ENCODE measurements at regions of chr10 and their contacts with region 1.

Region 1: DNA sequence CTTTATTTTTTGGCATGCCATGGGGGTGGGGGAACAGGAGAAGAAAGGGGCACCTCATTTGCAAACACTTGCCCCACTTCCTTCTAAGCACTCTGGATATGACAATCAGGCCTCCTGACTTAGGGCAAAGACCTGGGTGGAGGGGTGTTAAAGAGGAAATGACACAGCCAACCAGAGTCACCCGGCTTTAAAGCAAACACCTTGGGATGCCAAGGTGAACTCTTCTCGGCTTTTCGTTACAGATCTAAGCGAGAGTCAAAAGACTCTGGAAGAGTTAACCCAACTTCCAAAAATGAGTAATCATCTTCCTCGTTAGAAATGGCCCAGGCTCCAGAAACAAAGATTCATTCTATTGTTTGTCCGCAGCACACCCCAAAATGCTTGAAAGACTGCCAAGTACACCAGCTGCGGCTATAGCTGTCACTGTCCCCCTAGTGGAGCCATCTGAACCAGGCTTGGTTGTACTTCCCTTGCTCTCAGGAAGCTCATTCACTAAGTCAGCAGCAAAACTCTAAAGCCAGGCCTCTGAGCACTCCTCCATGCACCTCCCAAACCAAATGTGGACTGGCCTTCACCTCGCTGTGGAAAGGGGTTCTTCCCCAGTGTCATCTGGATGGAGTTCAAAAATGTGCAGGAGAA is 24.8 kb downstream of the FAM53B start:
- DNase-seq: no peak
- ATAC-seq: peak; percentile 43
- H3K4me3 Mint-ChIP-seq: peak overlapping the region; percentile 69
- H3K27ac Mint-ChIP-seq: peak overlapping the region; percentile 93
- H3K4me1 Mint-ChIP-seq: peaks cover 98% of the 10 kb centered on the region
- H3K27me3 Mint-ChIP-seq: no peaks in the 10 kb centered on the region
- CTCF ChIP-seq: no peak

Region 2: GRCh38 chr10:124388823-124389612 is 330.3 kb before region 1 on chr10:
- CTCF ChIA-PET with region 1: no interaction called
- POLR2A ChIA-PET with region 1: no interaction called
- intact Hi-C with region 1: no loop called
- DNase-seq: peak; percentile 97
- ATAC-seq: peak; percentile 99
- H3K4me3 Mint-ChIP-seq: peak overlapping the region; percentile 58
- H3K27ac Mint-ChIP-seq: no peak overlapping the region
- H3K4me1 Mint-ChIP-seq: peaks cover 3% of the 10 kb centered on the region
- H3K27me3 Mint-ChIP-seq: peaks cover 7% of the 10 kb centered on the region
- CTCF ChIP-seq: peak; percentile 86

Region 3: GRCh38 chr10:124539935-124540641 is 179.2 kb before region 1 on chr10:
- CTCF ChIA-PET with region 1: interaction called, 29 read pairs
- POLR2A ChIA-PET with region 1: interaction called, 69 read pairs
- intact Hi-C with region 1: loop called (anchors 1 kb)
- DNase-seq: peak; percentile 71
- ATAC-seq: peak; percentile 66
- H3K4me3 Mint-ChIP-seq: peak overlapping the region; percentile 50
- H3K27ac Mint-ChIP-seq: peak overlapping the region; percentile 82
- H3K4me1 Mint-ChIP-seq: peaks cover 89% of the 10 kb centered on the region
- H3K27me3 Mint-ChIP-seq: no peaks in the 10 kb centered on the region
- CTCF ChIP-seq: no peak

Region 4: GRCh38 chr10:124612611-124613498 is 106.5 kb before region 1 on chr10:
- CTCF ChIA-PET with region 1: interaction called, 5 read pairs
- POLR2A ChIA-PET with region 1: interaction called, 12 read pairs
- intact Hi-C with region 1: no loop called
- DNase-seq: no peak
- ATAC-seq: peak; percentile 54
- H3K4me3 Mint-ChIP-seq: peak overlapping the region; percentile 45
- H3K27ac Mint-ChIP-seq: peak overlapping the region; percentile 96
- H3K4me1 Mint-ChIP-seq: peaks cover 83% of the 10 kb centered on the region
- H3K27me3 Mint-ChIP-seq: no peaks in the 10 kb centered on the region
- CTCF ChIP-seq: no peak

Region 5: DNA sequence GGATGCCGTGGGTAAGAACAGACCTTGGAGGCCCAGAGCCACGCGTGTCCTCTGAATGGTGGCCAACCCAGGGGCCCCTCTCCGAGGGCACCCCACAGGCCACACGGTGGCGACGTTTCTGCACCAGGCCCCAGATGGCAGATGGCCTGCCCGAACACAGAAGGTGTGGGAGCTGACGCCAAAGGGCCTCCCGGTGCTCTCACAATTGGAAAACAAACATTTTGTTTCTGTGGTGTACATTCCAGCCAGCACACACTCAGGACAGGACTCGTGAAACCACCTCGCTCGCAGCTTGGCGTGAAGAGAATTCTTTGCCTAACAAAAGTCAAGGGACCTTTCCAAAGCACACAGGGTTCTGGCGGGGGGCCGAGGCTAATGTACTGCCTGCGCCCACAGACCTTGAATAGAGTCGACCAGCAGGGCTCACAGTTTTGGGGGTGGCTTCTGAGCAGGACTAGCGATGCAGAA is 87.2 kb before region 1 on chr10:
- CTCF ChIA-PET with region 1: interaction called, 9 read pairs
- POLR2A ChIA-PET with region 1: interaction called, 28 read pairs
- intact Hi-C with region 1: no loop called
- DNase-seq: no peak
- ATAC-seq: no peak
- H3K4me3 Mint-ChIP-seq: no peak overlapping the region
- H3K27ac Mint-ChIP-seq: peak overlapping the region; percentile 95
- H3K4me1 Mint-ChIP-seq: peaks cover 95% of the 10 kb centered on the region
- H3K27me3 Mint-ChIP-seq: no peaks in the 10 kb centered on the region
- CTCF ChIP-seq: no peak

Region 6: DNA sequence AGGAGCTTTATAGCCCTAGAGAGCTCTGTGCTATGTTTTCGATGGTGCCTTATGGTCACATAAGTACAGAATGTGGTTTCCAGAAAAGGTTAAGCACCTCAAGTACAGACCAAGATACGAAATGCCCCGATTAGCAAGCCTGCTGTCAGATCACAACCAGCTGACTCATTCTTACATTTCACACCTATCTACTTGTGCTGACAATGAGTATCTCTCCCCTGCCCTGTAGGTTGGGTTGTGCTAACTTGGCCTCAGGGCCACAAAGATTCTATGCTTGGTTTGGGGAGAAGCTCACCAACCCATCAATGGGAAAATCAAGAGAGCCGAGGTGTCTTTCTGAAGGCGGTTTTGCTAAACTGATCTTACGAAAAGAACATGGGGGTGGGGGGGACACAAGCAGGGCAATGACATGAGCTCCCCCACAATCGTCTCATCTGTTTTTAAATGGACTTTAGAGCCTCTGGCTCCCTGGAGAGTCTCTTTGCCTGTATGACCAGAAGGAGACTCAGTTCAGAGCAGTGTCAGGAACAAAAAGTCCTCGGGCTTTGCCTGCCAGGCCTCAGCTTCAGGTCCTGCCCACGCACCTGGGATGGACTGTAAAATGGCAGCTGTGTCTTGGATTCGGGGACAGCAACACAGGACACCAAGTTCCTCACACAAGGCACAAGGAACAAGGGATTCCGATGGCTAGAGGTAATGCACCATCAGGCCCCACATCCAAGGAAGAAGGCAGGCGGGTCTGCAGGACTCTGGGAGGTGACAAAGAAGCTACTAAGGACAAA is 30.3 kb before region 1 on chr10:
- CTCF ChIA-PET with region 1: interaction called, 44 read pairs
- POLR2A ChIA-PET with region 1: interaction called, 133 read pairs
- intact Hi-C with region 1: loop called (anchors 1 kb)
- DNase-seq: no peak
- ATAC-seq: peak; percentile 51
- H3K4me3 Mint-ChIP-seq: no peak overlapping the region
- H3K27ac Mint-ChIP-seq: peak overlapping the region; percentile 86
- H3K4me1 Mint-ChIP-seq: peaks cover 84% of the 10 kb centered on the region
- H3K27me3 Mint-ChIP-seq: no peaks in the 10 kb centered on the region
- CTCF ChIP-seq: no peak

Region 7: DNA sequence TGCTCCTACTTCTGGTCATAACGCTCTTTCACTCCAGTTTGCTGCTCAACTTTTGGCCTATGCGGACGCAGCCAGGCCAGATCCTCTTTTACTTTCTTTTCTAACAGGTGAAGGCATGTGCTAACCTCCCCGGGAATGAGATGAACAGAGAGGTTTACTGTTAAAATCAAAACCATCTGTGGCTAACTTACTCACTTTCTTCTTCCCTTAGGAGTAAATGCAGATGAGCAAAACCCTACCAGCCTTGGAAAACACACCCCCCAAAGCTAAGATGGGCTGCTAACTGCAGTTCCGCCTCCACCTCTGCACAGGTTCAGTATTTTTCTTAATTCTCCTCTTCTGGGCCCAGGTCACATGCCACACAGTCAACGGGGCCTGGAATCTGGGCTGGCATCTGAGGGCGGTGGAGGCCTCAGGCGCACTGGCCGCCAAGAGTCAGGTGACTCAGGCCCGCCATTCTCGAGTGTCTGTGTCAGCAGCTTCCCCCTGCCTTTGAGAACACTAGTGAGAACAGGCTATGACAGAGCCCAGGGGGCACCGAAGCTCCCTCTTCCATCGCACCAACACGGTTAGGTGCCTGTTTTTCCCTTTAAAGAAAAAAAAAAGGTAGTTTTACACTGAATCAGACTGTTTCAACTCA is 13.7 kb after region 1 on chr10:
- CTCF ChIA-PET with region 1: interaction called, 17 read pairs
- POLR2A ChIA-PET with region 1: interaction called, 135 read pairs
- intact Hi-C with region 1: loop called (anchors 1 kb)
- DNase-seq: no peak
- ATAC-seq: peak; percentile 43
- H3K4me3 Mint-ChIP-seq: peak overlapping the region; percentile 58
- H3K27ac Mint-ChIP-seq: peak overlapping the region; percentile 82
- H3K4me1 Mint-ChIP-seq: peaks cover 100% of the 10 kb centered on the region
- H3K27me3 Mint-ChIP-seq: no peaks in the 10 kb centered on the region
- CTCF ChIP-seq: no peak